ENCODE measurements at regions of chr4 and their contacts with region 1.

Region 1: DNA sequence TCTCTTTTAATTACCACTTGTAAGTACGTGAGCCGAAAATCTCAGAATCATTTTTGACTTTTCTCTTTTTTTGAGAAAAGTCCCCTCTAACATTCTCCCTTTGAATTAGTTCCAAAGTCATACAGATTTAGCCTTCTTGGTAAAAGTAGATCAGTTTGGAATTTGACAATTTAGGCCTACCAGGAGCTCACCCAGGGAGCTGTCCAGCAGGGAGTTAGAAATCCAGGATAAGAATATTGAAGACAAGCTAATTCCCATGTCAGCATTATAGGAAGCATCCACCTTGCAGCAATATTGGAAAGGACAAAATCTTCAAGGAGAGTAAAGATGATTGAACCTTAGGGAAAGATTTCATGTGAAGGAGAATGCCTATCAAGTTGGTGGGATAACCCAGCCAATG is 352.2 kb upstream of the CPEB2 start:
- DNase-seq: peak; percentile 8
- H3K4me3 ChIP-seq: no peak overlapping the region
- CTCF ChIP-seq: no peak

Region 2: GRCh38 chr4:14415146-14415545 is 235.0 kb before region 1 on chr4:
- in situ Hi-C with region 1: loop called (anchors 10 kb)
- DNase-seq: peak; percentile 50
- H3K4me3 ChIP-seq: no peak overlapping the region
- CTCF ChIP-seq: no peak

Region 3: DNA sequence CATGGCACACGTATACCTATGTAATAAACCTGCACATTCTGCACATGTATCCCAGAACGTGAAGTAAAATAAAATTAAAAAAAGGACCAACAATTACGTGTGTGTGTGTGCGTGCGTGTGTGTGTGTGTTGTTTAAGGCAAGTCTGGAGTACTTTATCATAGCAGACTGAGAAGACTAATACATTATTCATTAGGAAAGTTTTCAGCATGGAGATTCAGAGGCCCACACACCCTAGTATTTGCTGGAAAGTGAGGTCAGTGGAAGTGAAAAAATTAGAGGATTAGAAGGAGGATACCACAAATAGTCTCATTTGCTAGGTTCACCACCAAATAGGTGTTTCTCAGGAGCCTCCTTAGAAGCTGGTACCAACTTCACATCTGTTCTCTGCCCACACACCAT is 105.0 kb before region 1 on chr4:
- in situ Hi-C with region 1: no loop called
- DNase-seq: no peak
- H3K4me3 ChIP-seq: no peak overlapping the region
- CTCF ChIP-seq: no peak

Region 4: DNA sequence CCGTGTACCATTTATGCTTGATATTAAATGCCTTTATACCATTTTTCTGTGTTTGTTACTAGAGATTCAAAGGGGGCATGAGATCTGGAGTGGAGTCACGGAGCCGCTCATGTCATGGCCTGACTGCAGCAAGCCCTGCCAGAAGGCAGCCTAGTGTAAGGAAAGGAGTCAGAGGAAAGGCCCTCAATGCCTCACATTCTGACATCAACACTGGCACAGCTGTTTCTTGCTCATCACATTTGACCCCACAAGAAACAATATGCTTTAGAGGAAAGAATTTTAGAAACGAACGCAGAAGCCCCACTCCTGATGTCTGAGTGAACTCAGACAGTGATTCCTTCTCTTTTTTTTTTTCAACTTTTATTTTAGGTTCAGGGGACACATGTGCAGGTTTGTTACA is 29.8 kb after region 1 on chr4:
- in situ Hi-C with region 1: loop called (anchors 5 kb)
- DNase-seq: no peak
- H3K4me3 ChIP-seq: no peak overlapping the region
- CTCF ChIP-seq: no peak

Measured in astrocyte of the cerebellum (primary cell).